GM12878 (cell line): ENCODE measurements at regions of chr1 and their contacts with region 1.

Region 1: DNA sequence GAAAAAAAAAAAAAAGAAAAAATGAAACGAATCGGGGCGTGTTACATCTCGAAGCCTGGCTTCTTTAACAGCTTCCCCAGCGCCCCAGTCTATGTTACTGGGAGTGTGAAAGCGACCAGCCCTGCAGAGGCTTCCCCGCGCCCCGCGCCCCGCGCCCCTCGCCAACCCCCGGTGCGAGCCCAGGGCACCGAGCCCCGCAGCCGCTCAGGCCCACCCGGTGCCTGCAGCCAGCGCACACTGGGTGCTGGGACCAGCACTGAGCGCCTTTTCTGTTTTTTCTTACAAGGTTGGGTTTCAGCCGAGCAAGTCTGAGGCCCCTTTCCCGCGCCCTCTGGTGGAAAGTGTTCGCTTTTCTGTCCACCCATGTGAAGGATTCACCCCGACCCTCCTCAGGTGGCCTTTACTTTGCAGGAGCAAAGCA is 42.1 kb upstream of the ZNF496 start:
- DNase-seq: no peak
- ATAC-seq: peak; percentile 94
- H3K4me3 ChIP-seq: no peak overlapping the region
- H3K27ac ChIP-seq: no peak overlapping the region
- H3K4me1 ChIP-seq: no peaks in the 10 kb centered on the region
- H3K27me3 ChIP-seq: no peaks in the 10 kb centered on the region
- CTCF ChIP-seq: peak; percentile 29 to 62 (median 51); a peak in 5 of 6 replicates
- EP300 ChIP-seq: no peak
- POLR2A ChIP-seq: no peak
- RAD21 ChIP-seq: 0 out of 2 replicates have a peak, but pooled peaks have one; percentile 15

Region 2: GRCh38 chr1:246888522-246888921 is 485.2 kb before region 1 on chr1:
- CTCF ChIA-PET with region 1: no interaction called
- POLR2A ChIA-PET with region 1: no interaction called
- RAD21 ChIA-PET with region 1: no interaction called
- SMC1A ChIA-PET with region 1: no interaction called
- in situ Hi-C with region 1: no loop called
- intact Hi-C with region 1: no loop called
- DNase-seq: no peak
- ATAC-seq: no peak
- H3K4me3 ChIP-seq: no peak overlapping the region
- H3K27ac ChIP-seq: no peak overlapping the region
- H3K4me1 ChIP-seq: peaks cover under 1% of the 10 kb centered on the region
- H3K27me3 ChIP-seq: no peaks in the 10 kb centered on the region
- CTCF ChIP-seq: no peak
- EP300 ChIP-seq: no peak
- POLR2A ChIP-seq: no peak
- RAD21 ChIP-seq: no peak

Region 3: GRCh38 chr1:247043406-247043805 is 330.3 kb before region 1 on chr1:
- CTCF ChIA-PET with region 1: no interaction called
- POLR2A ChIA-PET with region 1: no interaction called
- RAD21 ChIA-PET with region 1: no interaction called
- SMC1A ChIA-PET with region 1: no interaction called
- in situ Hi-C with region 1: no loop called
- intact Hi-C with region 1: no loop called
- DNase-seq: no peak
- ATAC-seq: no peak
- H3K4me3 ChIP-seq: no peak overlapping the region
- H3K27ac ChIP-seq: no peak overlapping the region
- H3K4me1 ChIP-seq: no peaks in the 10 kb centered on the region
- H3K27me3 ChIP-seq: no peaks in the 10 kb centered on the region
- CTCF ChIP-seq: no peak
- EP300 ChIP-seq: no peak
- POLR2A ChIP-seq: no peak
- RAD21 ChIP-seq: no peak

Region 4: DNA sequence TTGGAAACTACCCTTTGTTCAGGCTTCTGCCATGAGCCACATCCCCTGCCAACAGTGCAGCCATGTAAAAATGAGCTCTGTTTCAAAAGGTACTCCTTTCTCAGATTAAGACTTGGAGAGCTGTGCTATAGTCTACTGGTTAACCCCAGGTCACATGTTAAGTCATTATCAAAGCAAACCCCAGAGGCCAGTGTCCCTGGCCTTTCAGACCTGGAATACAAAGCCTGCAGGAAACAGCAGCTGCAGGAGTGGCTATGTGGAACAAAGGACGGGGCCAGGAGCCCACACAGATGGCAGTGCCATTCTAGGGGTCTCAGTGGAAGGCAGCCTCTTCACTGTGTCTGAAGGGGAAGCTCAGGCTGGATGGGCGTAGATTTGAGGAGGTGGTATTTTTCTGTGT is 48.8 kb before region 1 on chr1:
- CTCF ChIA-PET with region 1: interaction called, 13 read pairs
- POLR2A ChIA-PET with region 1: no interaction called
- RAD21 ChIA-PET with region 1: no interaction called
- SMC1A ChIA-PET with region 1: no interaction called
- in situ Hi-C with region 1: no loop called
- intact Hi-C with region 1: no loop called
- DNase-seq: no peak
- ATAC-seq: no peak; the same call in 2 of the 3 replicates
- H3K4me3 ChIP-seq: no peak overlapping the region
- H3K27ac ChIP-seq: no peak overlapping the region
- H3K4me1 ChIP-seq: peaks cover 1% of the 10 kb centered on the region; the same call in 1 of the 2 replicates
- H3K27me3 ChIP-seq: no peaks in the 10 kb centered on the region
- CTCF ChIP-seq: no peak
- EP300 ChIP-seq: no peak
- POLR2A ChIP-seq: no peak
- RAD21 ChIP-seq: no peak

Region 5: GRCh38 chr1:247357781-247358211 is 15.9 kb before region 1 on chr1:
- CTCF ChIA-PET with region 1: interaction called, 14 read pairs
- POLR2A ChIA-PET with region 1: interaction called, 5 read pairs
- RAD21 ChIA-PET with region 1: interaction called, 6 read pairs
- SMC1A ChIA-PET with region 1: interaction called, 4 read pairs
- in situ Hi-C with region 1: no loop called
- intact Hi-C with region 1: no loop called
- DNase-seq: peak; percentile 77
- ATAC-seq: peak; percentile 92
- H3K4me3 ChIP-seq: peak overlapping the region; percentile 25; the same call in 1 of the 2 replicates
- H3K27ac ChIP-seq: no peak overlapping the region
- H3K4me1 ChIP-seq: peaks cover 13% of the 10 kb centered on the region
- H3K27me3 ChIP-seq: no peaks in the 10 kb centered on the region
- CTCF ChIP-seq: no peak
- EP300 ChIP-seq: peak; percentile 41 to 69; a peak in 3 of 4 replicates
- POLR2A ChIP-seq: no peak
- RAD21 ChIP-seq: no peak

Region 6: DNA sequence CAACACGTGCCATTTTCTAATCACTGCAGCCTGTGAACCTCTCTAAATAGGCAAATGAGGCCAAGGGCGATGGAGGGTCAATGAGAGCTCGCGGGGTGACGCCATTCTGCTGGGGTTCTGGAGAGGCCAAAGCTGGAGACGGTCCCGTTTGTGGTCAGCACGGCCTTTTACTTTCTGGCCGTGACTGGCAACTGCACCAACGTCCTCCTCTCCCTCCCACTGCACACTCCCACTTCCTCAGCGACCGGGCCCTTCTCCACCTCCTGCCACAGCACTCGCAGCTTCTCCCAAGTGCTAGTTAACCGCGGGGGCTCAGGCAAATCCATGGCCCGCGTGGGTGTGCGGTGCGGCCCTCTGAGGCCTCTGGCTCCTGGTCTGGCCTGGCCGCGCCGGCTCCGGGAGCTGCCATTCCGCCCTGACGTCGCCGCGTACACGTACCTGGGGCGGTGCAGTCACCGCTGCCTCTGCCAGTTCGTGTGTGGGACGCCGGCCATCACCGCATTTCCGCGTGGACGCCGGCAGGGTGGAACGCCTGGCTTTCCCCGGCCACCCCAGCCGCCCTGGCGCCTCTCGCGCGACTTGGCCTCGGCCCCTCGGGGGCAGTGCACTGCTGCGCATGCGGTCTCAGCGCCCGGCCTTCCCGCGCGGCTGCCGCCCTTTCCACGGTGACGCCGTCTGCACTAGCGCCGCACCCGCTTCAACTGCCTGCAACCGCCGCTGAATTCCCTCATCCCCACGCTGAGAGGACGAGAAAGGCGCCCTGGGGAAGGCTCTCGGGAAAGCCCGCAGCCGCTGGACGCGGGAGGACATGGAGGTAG is 144.3 kb after region 1 on chr1:
- CTCF ChIA-PET with region 1: no interaction called
- POLR2A ChIA-PET with region 1: no interaction called
- RAD21 ChIA-PET with region 1: no interaction called
- SMC1A ChIA-PET with region 1: no interaction called
- in situ Hi-C with region 1: no loop called
- intact Hi-C with region 1: no loop called
- DNase-seq: no peak
- ATAC-seq: no peak
- H3K4me3 ChIP-seq: no peak overlapping the region
- H3K27ac ChIP-seq: no peak overlapping the region
- H3K4me1 ChIP-seq: no peaks in the 10 kb centered on the region
- H3K27me3 ChIP-seq: no peaks in the 10 kb centered on the region
- CTCF ChIP-seq: no peak
- EP300 ChIP-seq: no peak
- POLR2A ChIP-seq: no peak
- RAD21 ChIP-seq: no peak

Region 7: DNA sequence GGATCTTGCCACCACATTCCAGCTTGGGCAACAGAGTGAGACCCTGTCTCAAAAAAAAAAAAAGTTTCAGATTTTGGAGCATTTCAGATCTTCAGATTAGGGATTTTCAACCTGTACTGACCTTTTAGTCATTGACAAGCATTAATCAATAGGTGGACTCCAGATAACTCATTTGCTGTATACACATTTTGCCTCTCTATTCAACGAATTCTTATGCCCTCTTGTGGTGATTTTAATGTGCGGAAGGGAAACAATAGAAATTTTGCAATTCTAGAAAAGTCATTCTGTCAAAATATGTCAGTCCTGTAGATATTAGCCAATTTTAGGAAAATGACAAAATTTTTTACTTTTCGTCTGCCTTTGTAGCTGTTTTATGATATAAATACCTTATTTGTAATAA is 202.8 kb after region 1 on chr1:
- CTCF ChIA-PET with region 1: interaction called, 6 read pairs
- POLR2A ChIA-PET with region 1: no interaction called
- RAD21 ChIA-PET with region 1: interaction called, 7 read pairs
- SMC1A ChIA-PET with region 1: no interaction called
- in situ Hi-C with region 1: no loop called
- intact Hi-C with region 1: loop called (anchors 1 kb)
- DNase-seq: no peak
- ATAC-seq: peak; percentile 63
- H3K4me3 ChIP-seq: no peak overlapping the region
- H3K27ac ChIP-seq: no peak overlapping the region
- H3K4me1 ChIP-seq: no peaks in the 10 kb centered on the region
- H3K27me3 ChIP-seq: no peaks in the 10 kb centered on the region; a peak in 2 of 4 replicates
- CTCF ChIP-seq: peak; percentile 39 to 57 (median 48)
- EP300 ChIP-seq: no peak
- POLR2A ChIP-seq: no peak
- RAD21 ChIP-seq: peak; percentile 56

Region 8: DNA sequence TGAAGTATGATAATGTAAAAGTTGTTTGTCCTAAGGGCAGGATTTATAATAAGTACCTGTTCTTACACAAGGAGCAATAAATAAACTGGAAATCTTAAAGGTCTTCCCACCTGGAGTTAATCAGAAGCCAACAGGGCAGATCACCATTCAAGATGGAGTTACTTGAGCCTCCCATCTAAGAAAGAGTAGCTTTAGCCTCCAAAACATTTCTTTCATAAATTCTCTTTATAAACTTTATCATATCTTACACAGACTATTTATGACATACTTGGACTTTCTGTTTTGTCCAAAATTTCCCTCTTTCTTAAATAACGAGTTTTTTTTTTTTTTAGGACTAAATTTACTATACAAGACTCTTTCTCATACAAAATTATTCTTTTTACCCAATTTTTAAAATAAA is 1047.7 kb after region 1 on chr1:
- CTCF ChIA-PET with region 1: no interaction called
- POLR2A ChIA-PET with region 1: no interaction called
- RAD21 ChIA-PET with region 1: no interaction called
- SMC1A ChIA-PET with region 1: no interaction called
- in situ Hi-C with region 1: loop called (anchors 25 kb)
- intact Hi-C with region 1: no loop called
- DNase-seq: no peak
- ATAC-seq: no peak
- H3K4me3 ChIP-seq: no peak overlapping the region
- H3K27ac ChIP-seq: no peak overlapping the region
- H3K4me1 ChIP-seq: no peaks in the 10 kb centered on the region; the same call in 1 of the 2 replicates
- H3K27me3 ChIP-seq: no peaks in the 10 kb centered on the region
- CTCF ChIP-seq: no peak
- EP300 ChIP-seq: no peak
- POLR2A ChIP-seq: no peak
- RAD21 ChIP-seq: no peak